HepG2 (cell line): ENCODE measurements at regions of chr6 and their contacts with region 1.

Region 1: GRCh38 chr6:6905961-6906518 is 201.7 kb upstream of the RREB1 start:
- DNase-seq: no peak
- ATAC-seq: no peak
- H3K4me3 ChIP-seq: no peak overlapping the region
- H3K27ac ChIP-seq: no peak overlapping the region
- H3K4me1 ChIP-seq: no peaks in the 10 kb centered on the region
- H3K27me3 ChIP-seq: peaks cover 0 to 15% of the 10 kb centered on the region in 2 experiments; a peak in 3 of 5 replicates
- CTCF ChIP-seq: no peak
- EP300 ChIP-seq: no peak
- POLR2A ChIP-seq: no peak
- RAD21 ChIP-seq: no peak

Region 2: DNA sequence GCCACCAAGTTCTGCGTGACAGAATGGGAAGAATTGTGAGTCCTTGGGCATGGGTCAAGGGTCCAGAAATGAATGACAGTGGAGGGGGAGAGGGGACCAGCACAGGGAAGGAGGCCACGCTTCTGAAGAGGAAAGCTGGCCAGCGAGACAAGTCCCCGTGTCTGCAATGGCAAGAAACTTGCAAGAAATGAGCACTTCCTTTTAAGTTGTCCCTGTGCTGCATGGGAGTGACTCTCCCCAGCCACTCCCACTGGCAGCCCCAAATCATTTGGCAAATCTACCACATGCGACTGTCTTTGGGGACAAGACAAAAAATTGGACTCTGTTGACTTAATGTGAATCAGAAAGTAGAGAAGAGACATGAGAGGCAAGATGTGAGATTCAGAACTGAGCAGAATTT is 40.4 kb before region 1 on chr6:
- CTCF ChIA-PET with region 1: no interaction called
- POLR2A ChIA-PET with region 1: no interaction called
- in situ Hi-C with region 1: no loop called
- intact Hi-C with region 1: no loop called
- DNase-seq: no peak
- ATAC-seq: no peak
- H3K4me3 ChIP-seq: no peak overlapping the region
- H3K27ac ChIP-seq: no peak overlapping the region
- H3K4me1 ChIP-seq: peaks cover 5% of the 10 kb centered on the region; the same call in 1 of the 2 replicates
- H3K27me3 ChIP-seq: peaks cover 0 to 3% of the 10 kb centered on the region in 2 experiments; a peak in 1 of 5 replicates
- CTCF ChIP-seq: no peak
- EP300 ChIP-seq: no peak
- POLR2A ChIP-seq: no peak
- RAD21 ChIP-seq: no peak

Region 3: GRCh38 chr6:6942091-6942490 is 36.1 kb after region 1 on chr6:
- CTCF ChIA-PET with region 1: no interaction called
- POLR2A ChIA-PET with region 1: no interaction called
- in situ Hi-C with region 1: no loop called
- intact Hi-C with region 1: loop called (anchors 1 kb)
- DNase-seq: no peak
- ATAC-seq: 0 out of 3 replicates have a peak, but pooled peaks have one; percentile 38
- H3K4me3 ChIP-seq: no peak overlapping the region
- H3K27ac ChIP-seq: no peak overlapping the region
- H3K4me1 ChIP-seq: peaks cover 6% of the 10 kb centered on the region
- H3K27me3 ChIP-seq: peaks cover 0 to 8% of the 10 kb centered on the region in 2 experiments; a peak in 1 of 5 replicates
- CTCF ChIP-seq: no peak
- EP300 ChIP-seq: no peak
- POLR2A ChIP-seq: no peak
- RAD21 ChIP-seq: no peak

Region 4: GRCh38 chr6:7112741-7113313 is 206.8 kb after region 1 on chr6:
- CTCF ChIA-PET with region 1: no interaction called
- POLR2A ChIA-PET with region 1: no interaction called
- in situ Hi-C with region 1: no loop called
- intact Hi-C with region 1: no loop called
- DNase-seq: peak; percentile 69
- ATAC-seq: peak; percentile 58
- H3K4me3 ChIP-seq: peak overlapping the region; percentile 31 to 43 (median 33); a peak in 5 of 6 replicates
- H3K27ac ChIP-seq: peak overlapping the region; percentile 25
- H3K4me1 ChIP-seq: peaks cover 73% of the 10 kb centered on the region
- H3K27me3 ChIP-seq: no peaks in the 10 kb centered on the region; a peak in 1 of 5 replicates
- CTCF ChIP-seq: no peak
- EP300 ChIP-seq: no peak
- POLR2A ChIP-seq: no peak
- RAD21 ChIP-seq: no peak

Region 5: DNA sequence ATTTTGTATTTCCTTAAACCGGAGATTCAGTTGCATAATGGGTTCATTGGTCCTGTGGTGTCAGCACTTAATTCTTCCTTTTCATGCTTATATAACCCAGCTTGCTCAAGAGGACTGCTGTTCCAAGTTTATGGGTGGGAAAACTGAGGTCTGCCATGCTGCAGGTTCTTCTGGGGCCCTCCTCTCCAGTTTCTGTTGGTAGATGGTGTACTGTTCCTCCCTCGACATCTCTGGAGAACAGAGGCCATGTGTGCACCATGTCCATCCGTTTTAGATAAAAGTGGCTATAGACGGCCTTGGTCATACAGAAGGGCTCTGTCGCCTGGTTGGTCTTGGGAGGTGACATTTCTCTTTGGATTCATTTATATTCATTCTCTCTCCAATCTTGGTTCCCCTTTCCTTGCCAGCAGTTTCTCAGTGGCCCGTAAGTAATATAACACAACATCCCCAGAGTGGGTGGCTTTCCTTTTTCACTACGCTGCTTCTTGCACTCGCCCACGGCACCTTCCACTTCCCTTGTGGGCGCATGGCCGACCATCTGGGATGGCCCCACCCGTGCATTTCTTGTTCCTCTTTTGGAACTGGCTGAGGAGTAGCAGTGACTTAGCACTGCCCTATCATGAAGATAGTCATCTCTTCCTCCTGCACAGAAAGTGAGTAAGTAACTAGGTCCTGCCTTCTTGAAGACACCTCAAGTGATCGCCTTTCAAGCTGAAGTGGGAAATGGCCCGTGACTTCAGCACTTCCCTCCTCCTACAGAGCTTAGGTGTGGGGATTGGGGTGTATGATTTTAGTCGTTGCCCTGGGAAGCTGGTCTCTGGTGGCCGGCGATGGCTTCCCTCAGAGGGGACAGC is 295.9 kb after region 1 on chr6:
- CTCF ChIA-PET with region 1: no interaction called
- POLR2A ChIA-PET with region 1: no interaction called
- in situ Hi-C with region 1: no loop called
- intact Hi-C with region 1: no loop called
- DNase-seq: no peak
- ATAC-seq: no peak
- H3K4me3 ChIP-seq: no peak overlapping the region
- H3K27ac ChIP-seq: peak overlapping the region; percentile 74
- H3K4me1 ChIP-seq: peaks cover 35% of the 10 kb centered on the region
- H3K27me3 ChIP-seq: no peaks in the 10 kb centered on the region
- CTCF ChIP-seq: no peak
- EP300 ChIP-seq: no peak
- POLR2A ChIP-seq: no peak
- RAD21 ChIP-seq: no peak